B cell (primary cell): ENCODE measurements at regions of chr1 and their contacts with region 1.

Region 1: DNA sequence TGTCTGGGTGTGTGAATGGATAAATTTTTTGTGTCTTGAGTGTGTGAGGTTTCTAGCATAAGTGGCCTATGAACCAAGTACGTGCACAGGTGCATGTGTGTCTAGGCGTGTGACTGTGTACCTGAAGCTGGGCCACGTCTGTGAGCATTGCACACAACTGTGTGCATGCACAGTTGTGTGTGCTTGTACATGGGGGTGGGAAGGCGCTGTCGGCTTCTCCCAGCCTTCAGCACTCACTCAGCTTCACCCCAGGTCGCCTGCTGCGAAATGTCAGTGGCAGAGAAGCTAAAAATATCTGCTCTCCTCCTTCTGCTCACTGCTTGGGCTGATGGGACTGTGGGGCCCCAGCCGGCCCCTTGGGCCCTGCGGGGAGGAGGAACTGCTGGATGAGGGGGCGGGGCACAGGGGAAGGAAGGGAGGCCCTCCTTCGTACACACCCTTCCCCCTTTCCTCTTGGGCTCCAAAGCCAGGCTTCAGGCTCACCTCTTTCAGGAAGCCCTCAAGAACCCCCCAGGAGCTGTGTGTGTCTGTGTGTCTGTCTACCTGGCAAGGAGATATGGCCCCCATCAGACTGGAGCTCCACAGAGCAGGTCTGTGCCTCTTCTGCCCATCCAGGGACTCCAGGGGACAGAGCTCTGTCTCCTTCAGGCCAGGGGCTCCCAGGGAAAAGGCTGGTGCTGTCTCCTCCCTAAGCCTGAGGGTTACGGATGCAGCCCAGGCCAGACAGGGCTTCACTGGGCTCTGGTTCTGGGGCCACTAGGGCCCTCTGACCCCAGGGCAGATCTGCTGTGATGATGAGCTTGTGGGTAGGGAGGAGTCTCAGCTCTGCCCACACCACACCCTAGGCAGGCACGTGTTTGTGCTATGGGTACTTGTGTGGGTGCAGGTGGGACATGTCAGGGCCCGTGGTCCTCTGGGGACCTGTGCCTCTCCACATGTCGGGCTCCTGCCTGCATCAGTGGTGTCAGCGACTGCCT is 35.6 kb upstream of the WASF2 start:
- DNase-seq: peak; percentile 82
- ATAC-seq: peak; percentile 71
- H3K4me3 ChIP-seq: peak overlapping the region in 4 of 5 experiments; percentile 2 to 27 (median 16)
- H3K4me3 Mint-ChIP-seq: peak overlapping the region; percentile 69
- H3K27ac ChIP-seq: peak overlapping the region; percentile 83 to 88
- H3K27ac Mint-ChIP-seq: peak overlapping the region; percentile 87
- H3K4me1 ChIP-seq: peaks cover 67 to 69% of the 10 kb centered on the region in 2 donors
- H3K4me1 Mint-ChIP-seq: peaks cover 75% of the 10 kb centered on the region
- H3K27me3 ChIP-seq: peaks cover 0 to 4% (median 0%) of the 10 kb centered on the region in 4 experiments
- H3K27me3 Mint-ChIP-seq: no peaks in the 10 kb centered on the region
- CTCF ChIP-seq: no peak

Region 2: GRCh38 chr1:27402349-27402754 is 123.2 kb before region 1 on chr1:
- CTCF ChIA-PET with region 1: interaction called, 6 read pairs
- POLR2A ChIA-PET with region 1: interaction called, 3 read pairs
- intact Hi-C with region 1: loop called (anchors 2 kb)
- DNase-seq: peak; percentile 54
- ATAC-seq: no peak
- H3K4me3 ChIP-seq: no peak overlapping the region
- H3K4me3 Mint-ChIP-seq: peak overlapping the region; percentile 72
- H3K27ac ChIP-seq: peak overlapping the region; percentile 49 to 79
- H3K27ac Mint-ChIP-seq: peak overlapping the region; percentile 89
- H3K4me1 ChIP-seq: peaks cover 41 to 59% of the 10 kb centered on the region in 2 donors
- H3K4me1 Mint-ChIP-seq: peaks cover 58% of the 10 kb centered on the region
- H3K27me3 ChIP-seq: no peaks in the 10 kb centered on the region
- H3K27me3 Mint-ChIP-seq: no peaks in the 10 kb centered on the region
- CTCF ChIP-seq: no peak

Region 3: DNA sequence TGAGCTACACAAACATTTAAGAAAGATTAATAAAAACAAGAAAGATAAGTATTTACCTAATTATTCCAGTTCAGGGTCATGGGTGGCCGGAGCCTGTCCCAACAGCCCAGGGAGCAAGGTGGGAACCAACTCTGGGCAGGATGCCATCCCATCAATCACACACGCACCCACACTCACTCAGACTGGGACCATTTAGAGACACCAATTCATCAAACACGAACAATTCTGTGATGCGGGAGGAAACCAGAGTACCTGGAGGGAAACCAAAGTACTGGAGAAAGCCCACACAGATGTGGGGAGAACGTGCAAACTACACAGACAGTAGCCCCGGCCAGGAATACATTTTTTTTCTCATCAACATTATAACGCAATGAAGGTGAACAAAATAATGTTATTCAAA is 51.8 kb before region 1 on chr1:
- CTCF ChIA-PET with region 1: no interaction called
- POLR2A ChIA-PET with region 1: interaction called, 4 read pairs
- intact Hi-C with region 1: loop called (anchors 10 kb)
- DNase-seq: no peak
- ATAC-seq: no peak
- H3K4me3 ChIP-seq: no peak overlapping the region
- H3K4me3 Mint-ChIP-seq: peak overlapping the region; percentile 58
- H3K27ac ChIP-seq: peak overlapping the region in 1 of 2 donors; percentile 67
- H3K27ac Mint-ChIP-seq: peak overlapping the region; percentile 79
- H3K4me1 ChIP-seq: peaks cover 71 to 75% of the 10 kb centered on the region in 2 donors
- H3K4me1 Mint-ChIP-seq: peaks cover 83% of the 10 kb centered on the region
- H3K27me3 ChIP-seq: no peaks in the 10 kb centered on the region
- H3K27me3 Mint-ChIP-seq: no peaks in the 10 kb centered on the region
- CTCF ChIP-seq: no peak

Region 4: DNA sequence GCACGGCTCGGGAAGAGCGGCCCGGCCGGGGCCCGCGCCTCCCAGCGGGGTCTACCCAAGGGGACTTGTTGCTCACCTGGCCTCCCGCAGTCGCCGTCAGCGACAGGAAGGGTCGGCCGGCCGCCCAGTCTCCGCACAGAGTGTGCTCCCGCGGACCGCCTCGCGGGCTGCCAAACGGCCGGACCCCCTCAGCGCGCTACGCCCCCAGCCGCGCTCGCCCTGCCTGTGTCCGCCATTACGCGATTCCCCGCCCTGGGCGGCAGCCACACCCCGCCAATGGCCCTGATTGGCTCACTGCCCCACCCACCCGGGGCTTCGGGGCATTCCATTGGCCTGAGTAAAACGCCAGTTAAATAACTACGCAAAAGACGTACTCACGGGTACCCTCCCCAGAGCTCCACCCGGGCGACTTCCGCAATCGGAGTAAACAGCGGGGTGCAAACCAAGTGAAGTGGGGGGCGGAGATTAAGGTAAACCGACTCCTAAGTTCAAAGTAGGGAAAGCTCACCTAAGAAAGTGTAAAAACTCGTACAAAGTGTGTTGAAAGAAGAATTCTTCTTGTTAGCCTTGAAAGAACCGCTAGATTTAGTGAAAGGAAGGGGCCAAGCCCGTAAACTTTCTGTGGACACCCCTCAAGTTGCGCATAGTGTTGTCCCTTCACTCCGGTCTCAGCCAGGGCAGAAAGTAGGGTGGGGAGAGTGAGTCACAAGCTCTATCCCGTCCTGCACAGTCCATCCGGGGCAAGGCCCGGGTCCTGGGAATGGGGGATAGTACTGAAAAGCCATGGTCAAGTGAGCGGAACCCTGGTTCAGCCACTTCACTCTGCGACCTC is 35.5 kb before region 1 on chr1 and contains the start of gene WASF2:
- CTCF ChIA-PET with region 1: interaction called, 5 read pairs
- POLR2A ChIA-PET with region 1: interaction called, 38 read pairs
- intact Hi-C with region 1: loop called (anchors 1 kb)
- DNase-seq: peak; percentile 98
- ATAC-seq: peak; percentile 90
- H3K4me3 ChIP-seq: peak within 1 kb of the TSS; percentile 78 to 100 (median 99)
- H3K4me3 Mint-ChIP-seq: peak within 1 kb of the TSS; percentile 99
- H3K27ac ChIP-seq: peak within 1 kb of the TSS; percentile 89 to 95
- H3K27ac Mint-ChIP-seq: peak within 1 kb of the TSS; percentile 99
- H3K4me1 ChIP-seq: peaks cover 44 to 58% of the 10 kb centered on the region in 2 donors
- H3K4me1 Mint-ChIP-seq: peaks cover 57% of the 10 kb centered on the region
- H3K27me3 ChIP-seq: no peaks in the 10 kb centered on the region
- H3K27me3 Mint-ChIP-seq: no peaks in the 10 kb centered on the region
- CTCF ChIP-seq: no peak
- total RNA-seq, gene WASF2: 166 and 169 TPM in 2 replicates

Region 5: GRCh38 chr1:27568300-27569087 is 42.9 kb after region 1 on chr1:
- CTCF ChIA-PET with region 1: interaction called, 5 read pairs
- POLR2A ChIA-PET with region 1: interaction called, 4 read pairs
- intact Hi-C with region 1: loop called (anchors 2 kb)
- DNase-seq: peak; percentile 95
- ATAC-seq: peak; percentile 92
- H3K4me3 ChIP-seq: peak overlapping the region in 4 of 5 experiments; percentile 25 to 69 (median 50)
- H3K4me3 Mint-ChIP-seq: peak overlapping the region; percentile 86
- H3K27ac ChIP-seq: peak overlapping the region; percentile 27 to 68
- H3K27ac Mint-ChIP-seq: peak overlapping the region; percentile 69
- H3K4me1 ChIP-seq: peaks cover 15 to 38% of the 10 kb centered on the region in 2 donors
- H3K4me1 Mint-ChIP-seq: peaks cover 40% of the 10 kb centered on the region
- H3K27me3 ChIP-seq: no peaks in the 10 kb centered on the region
- H3K27me3 Mint-ChIP-seq: no peaks in the 10 kb centered on the region
- CTCF ChIP-seq: peak; percentile 82

Region 6: GRCh38 chr1:27609210-27609555 is 83.6 kb after region 1 on chr1:
- CTCF ChIA-PET with region 1: interaction called, 3 read pairs
- POLR2A ChIA-PET with region 1: interaction called, 18 read pairs
- intact Hi-C with region 1: no loop called
- DNase-seq: no peak
- ATAC-seq: peak; percentile 11
- H3K4me3 ChIP-seq: peak overlapping the region in 1 of 5 experiments; percentile 35
- H3K4me3 Mint-ChIP-seq: no peak overlapping the region
- H3K27ac ChIP-seq: peak overlapping the region; percentile 62 to 76
- H3K27ac Mint-ChIP-seq: no peak overlapping the region
- H3K4me1 ChIP-seq: peaks cover 33 to 49% of the 10 kb centered on the region in 2 donors
- H3K4me1 Mint-ChIP-seq: peaks cover 28% of the 10 kb centered on the region
- H3K27me3 ChIP-seq: no peaks in the 10 kb centered on the region
- H3K27me3 Mint-ChIP-seq: no peaks in the 10 kb centered on the region
- CTCF ChIP-seq: no peak

Region 7: DNA sequence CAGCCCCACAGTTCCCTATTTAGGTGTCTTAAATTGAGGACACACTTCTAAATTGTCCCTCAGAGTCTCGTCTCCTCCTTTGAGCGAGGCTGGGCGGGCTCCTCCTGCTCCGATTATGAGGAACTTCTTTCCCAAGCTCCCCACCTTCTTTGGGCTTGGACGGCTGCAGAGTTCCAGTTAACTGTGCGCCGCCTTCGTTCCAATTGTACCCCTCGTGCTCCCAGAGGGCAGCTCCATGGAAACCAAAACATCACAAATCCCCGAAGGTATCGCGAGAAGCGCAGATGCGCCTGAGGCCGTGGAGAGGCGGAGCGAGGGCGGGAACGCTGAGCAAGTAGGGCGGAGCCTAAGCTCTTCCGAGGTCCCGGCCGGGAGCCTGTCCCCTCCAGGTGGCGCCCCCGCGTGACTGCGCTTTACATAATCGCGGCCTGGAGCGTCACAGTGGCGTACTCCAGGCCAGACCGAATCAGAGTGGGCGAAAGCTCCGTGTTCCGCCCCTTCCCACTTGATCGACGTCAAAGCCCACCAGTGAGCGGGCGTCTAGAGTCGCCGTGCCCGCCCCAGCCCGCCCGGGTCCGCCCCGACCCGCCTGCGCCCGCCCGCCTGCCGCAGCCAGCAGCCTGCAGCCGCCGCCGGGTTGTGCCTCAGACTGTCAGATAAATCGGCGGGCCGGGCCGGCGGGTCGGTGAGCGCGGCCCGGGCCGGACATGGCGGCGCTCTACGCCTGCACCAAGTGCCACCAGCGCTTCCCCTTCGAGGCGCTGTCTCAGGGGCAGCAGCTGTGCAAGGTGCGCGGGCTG is 200.0 kb after region 1 on chr1 and contains the start of gene FAM76A:
- CTCF ChIA-PET with region 1: no interaction called
- POLR2A ChIA-PET with region 1: no interaction called
- intact Hi-C with region 1: loop called (anchors 5 kb)
- DNase-seq: peak; percentile 100
- ATAC-seq: peak; percentile 91
- H3K4me3 ChIP-seq: peak within 1 kb of the TSS; percentile 68 to 94 (median 74)
- H3K4me3 Mint-ChIP-seq: peak within 1 kb of the TSS; percentile 94
- H3K27ac ChIP-seq: peak within 1 kb of the TSS; percentile 96 to 98
- H3K27ac Mint-ChIP-seq: peak within 1 kb of the TSS; percentile 98
- H3K4me1 ChIP-seq: peaks cover 17% of the 10 kb centered on the region in 2 donors
- H3K4me1 Mint-ChIP-seq: peaks cover 25% of the 10 kb centered on the region
- H3K27me3 ChIP-seq: no peaks in the 10 kb centered on the region
- H3K27me3 Mint-ChIP-seq: no peaks in the 10 kb centered on the region
- CTCF ChIP-seq: peak; percentile 27
- total RNA-seq, gene FAM76A: 25.0 and 28.5 TPM in 2 replicates